A549 (cell line): ENCODE measurements at regions of chr12 and their contacts with region 1.

Region 1: GRCh38 chr12:123886931-123887615 is 85.6 kb downstream of the CCDC92 start:
- DNase-seq: peak in 1 of 2 experiments; percentile 25
- ATAC-seq: peak; percentile 36 to 65; a peak in 3 of 6 replicates
- H3K4me3 ChIP-seq: peak overlapping the region; percentile 21; the same call in 2 of the 3 replicates
- H3K27ac ChIP-seq: no peak overlapping the region
- H3K4me1 ChIP-seq: peaks cover 10% of the 10 kb centered on the region; the same call in 2 of the 3 replicates
- CTCF ChIP-seq: no peak
- EP300 ChIP-seq: no peak
- POLR2A ChIP-seq: no peak
- RAD21 ChIP-seq: no peak

Region 2: GRCh38 chr12:123905319-123905925 is 18.3 kb after region 1 on chr12:
- CTCF ChIA-PET with region 1: interaction called, 19 read pairs
- POLR2A ChIA-PET with region 1: no interaction called
- DNase-seq: peak; percentile 61 to 79
- ATAC-seq: peak; percentile 20 to 60; a peak in 3 of 6 replicates
- H3K4me3 ChIP-seq: no peak overlapping the region
- H3K27ac ChIP-seq: no peak overlapping the region
- H3K4me1 ChIP-seq: no peaks in the 10 kb centered on the region
- CTCF ChIP-seq: peak; percentile 79
- EP300 ChIP-seq: no peak
- POLR2A ChIP-seq: no peak
- RAD21 ChIP-seq: peak; percentile 36 to 51; a peak in 4 of 5 replicates

Region 3: DNA sequence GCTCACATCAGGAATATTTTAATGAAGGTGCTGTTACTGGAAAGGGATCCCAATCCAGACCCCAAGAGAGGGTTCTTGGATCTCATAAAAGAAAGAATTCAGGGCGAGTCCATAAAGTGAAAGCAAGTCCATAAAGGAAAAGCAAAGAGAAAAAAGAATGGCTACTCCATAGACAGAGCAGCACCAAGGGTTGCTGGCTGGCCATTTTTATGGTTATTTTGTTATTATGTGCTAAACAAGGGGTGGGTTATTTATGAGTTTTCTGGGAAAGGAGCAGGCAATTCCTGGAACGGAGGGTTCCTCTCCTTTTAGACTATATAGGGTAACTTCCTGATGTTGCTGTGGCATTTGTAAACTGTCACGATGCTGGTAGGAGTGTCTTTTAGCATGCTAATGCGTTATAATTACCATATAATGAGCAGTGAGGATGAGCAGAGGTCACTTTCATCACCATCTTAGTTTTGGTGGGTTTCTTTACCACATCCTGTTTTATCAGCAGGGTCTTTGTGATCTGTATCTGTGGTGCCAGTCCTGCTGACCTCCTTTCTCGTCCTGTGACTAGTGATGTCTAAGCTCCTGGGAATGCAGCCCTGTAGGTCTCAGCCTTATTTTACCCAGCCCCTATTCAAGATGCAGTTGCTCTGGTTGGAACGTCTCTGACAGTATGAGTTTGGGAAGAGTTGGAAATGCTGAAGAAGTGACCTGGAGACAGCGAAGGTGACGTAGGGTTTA is 186.4 kb after region 1 on chr12:
- CTCF ChIA-PET with region 1: no interaction called
- POLR2A ChIA-PET with region 1: no interaction called
- DNase-seq: no peak
- ATAC-seq: no peak
- H3K4me3 ChIP-seq: no peak overlapping the region
- H3K27ac ChIP-seq: no peak overlapping the region
- H3K4me1 ChIP-seq: no peaks in the 10 kb centered on the region; the same call in 2 of the 3 replicates
- CTCF ChIP-seq: no peak
- EP300 ChIP-seq: no peak
- POLR2A ChIP-seq: no peak
- RAD21 ChIP-seq: no peak